ENCODE measurements at regions of chr11 and their contacts with region 1.

Region 1: DNA sequence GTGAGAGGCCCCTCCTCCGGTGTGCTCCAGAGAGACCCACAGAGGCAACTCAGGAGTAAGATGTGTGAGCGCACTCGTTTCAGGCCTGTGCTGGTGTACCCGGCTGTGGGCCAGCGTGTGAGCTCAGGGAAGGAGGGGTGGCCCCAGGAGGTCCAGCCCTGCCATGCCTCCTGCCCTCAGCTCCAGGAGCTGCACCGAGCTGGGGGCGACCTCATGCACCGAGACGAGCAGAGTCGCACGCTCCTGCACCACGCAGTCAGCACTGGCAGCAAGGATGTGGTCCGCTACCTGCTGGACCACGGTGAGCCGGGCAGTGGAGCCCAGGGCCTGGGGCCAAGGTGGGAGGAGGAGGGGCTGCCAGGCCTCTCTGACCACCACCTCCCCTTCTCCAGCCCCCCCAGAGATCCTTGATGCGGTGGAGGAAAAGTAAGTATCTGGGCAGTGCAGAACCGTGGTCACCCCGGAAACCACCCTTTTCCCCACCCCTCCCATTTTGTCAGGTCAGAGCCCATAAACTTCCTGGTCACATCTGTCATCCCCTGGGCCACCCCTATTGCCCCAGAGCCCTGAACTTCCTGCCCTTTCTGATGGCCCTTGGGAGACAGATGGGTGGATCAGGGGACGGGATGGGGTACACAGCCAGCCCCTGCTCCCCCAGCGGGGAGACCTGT is 2.5 kb upstream of the MDK start:
- DNase-seq: no peak
- ATAC-seq: no peak
- H3K4me3 Mint-ChIP-seq: peak overlapping the region in 9 of 10 donors; percentile 16 to 84 (median 51)
- H3K27ac Mint-ChIP-seq: peak overlapping the region; percentile 19 to 91 (median 82)
- H3K4me1 Mint-ChIP-seq: peaks cover 12 to 23% (median 16%) of the 10 kb centered on the region in 4 donors
- H3K27me3 Mint-ChIP-seq: peaks cover 0 to 3% (median 0%) of the 10 kb centered on the region in 5 donors

Region 2: GRCh38 chr11:46295312-46296058 is 83.5 kb before region 1 on chr11:
- POLR2A ChIA-PET with region 1: no interaction called
- DNase-seq: peak; percentile 67 to 85 (median 74)
- ATAC-seq: peak; percentile 100
- H3K4me3 Mint-ChIP-seq: peak overlapping the region; percentile 80 to 91 (median 87)
- H3K27ac Mint-ChIP-seq: peak overlapping the region in 5 of 10 donors; percentile 19 to 74 (median 59)
- H3K4me1 Mint-ChIP-seq: peaks cover 7 to 15% (median 8%) of the 10 kb centered on the region in 4 donors
- H3K27me3 Mint-ChIP-seq: peaks cover 0 to 13% (median 11%) of the 10 kb centered on the region in 5 donors

Region 3: GRCh38 chr11:46352063-46352841 is 26.7 kb before region 1 on chr11:
- POLR2A ChIA-PET with region 1: interaction called, 20 read pairs
- DNase-seq: peak; percentile 76 to 91 (median 82)
- ATAC-seq: peak; percentile 65 to 74
- H3K4me3 Mint-ChIP-seq: peak overlapping the region; percentile 76 to 98 (median 87)
- H3K27ac Mint-ChIP-seq: peak overlapping the region; percentile 88 to 95 (median 94)
- H3K4me1 Mint-ChIP-seq: peaks cover 45 to 86% (median 82%) of the 10 kb centered on the region in 4 donors
- H3K27me3 Mint-ChIP-seq: no peaks in the 10 kb centered on the region

Measured in naive thymus-derived CD8-positive, alpha-beta T cell (primary cell).